CD8-positive, alpha-beta T cell (primary cell): ENCODE measurements at regions of chr6 and their contacts with region 1.

Region 1: GRCh38 chr6:33425668-33426577 is 6.1 kb downstream of the SYNGAP1 start:
- DNase-seq: peak; percentile 57 to 92 (median 84)
- ATAC-seq: peak; percentile 64
- H3K4me3 ChIP-seq: peak overlapping the region; percentile 50 to 69
- H3K4me3 Mint-ChIP-seq: peak overlapping the region; percentile 87
- H3K27ac ChIP-seq: peak overlapping the region; percentile 77 to 91
- H3K27ac Mint-ChIP-seq: peak overlapping the region; percentile 90
- H3K4me1 ChIP-seq: peaks cover 55% of the 10 kb centered on the region
- H3K4me1 Mint-ChIP-seq: peaks cover 77% of the 10 kb centered on the region
- H3K27me3 ChIP-seq: no peaks in the 10 kb centered on the region
- H3K27me3 Mint-ChIP-seq: no peaks in the 10 kb centered on the region
- CTCF ChIP-seq: peak; percentile 40

Region 2: GRCh38 chr6:33014841-33015634 is 410.9 kb before region 1 on chr6:
- CTCF ChIA-PET with region 1: no interaction called
- POLR2A ChIA-PET with region 1: no interaction called
- intact Hi-C with region 1: no loop called
- DNase-seq: peak in 7 of 9 experiments; percentile 43 to 89 (median 56)
- ATAC-seq: peak; percentile 74
- H3K4me3 ChIP-seq: no peak overlapping the region
- H3K4me3 Mint-ChIP-seq: no peak overlapping the region
- H3K27ac ChIP-seq: no peak overlapping the region
- H3K27ac Mint-ChIP-seq: no peak overlapping the region
- H3K4me1 ChIP-seq: peaks cover 23% of the 10 kb centered on the region
- H3K4me1 Mint-ChIP-seq: peaks cover 35% of the 10 kb centered on the region
- H3K27me3 ChIP-seq: no peaks in the 10 kb centered on the region
- H3K27me3 Mint-ChIP-seq: no peaks in the 10 kb centered on the region
- CTCF ChIP-seq: peak; percentile 87

Region 3: GRCh38 chr6:33118525-33119123 is 307.3 kb before region 1 on chr6:
- CTCF ChIA-PET with region 1: no interaction called
- POLR2A ChIA-PET with region 1: no interaction called
- intact Hi-C with region 1: loop called in 1 of 2 experiments (anchors 5 kb)
- DNase-seq: peak in 3 of 9 experiments; percentile 30 to 83 (median 76)
- ATAC-seq: peak; percentile 84
- H3K4me3 ChIP-seq: no peak overlapping the region
- H3K4me3 Mint-ChIP-seq: no peak overlapping the region
- H3K27ac ChIP-seq: no peak overlapping the region
- H3K27ac Mint-ChIP-seq: no peak overlapping the region
- H3K4me1 ChIP-seq: no peaks in the 10 kb centered on the region
- H3K4me1 Mint-ChIP-seq: peaks cover 18% of the 10 kb centered on the region
- H3K27me3 ChIP-seq: peaks cover 20 to 22% of the 10 kb centered on the region in 2 experiments
- H3K27me3 Mint-ChIP-seq: peaks cover 46% of the 10 kb centered on the region
- CTCF ChIP-seq: peak; percentile 65

Region 4: GRCh38 chr6:33299237-33299944 is 126.5 kb before region 1 on chr6:
- CTCF ChIA-PET with region 1: interaction called, 3 read pairs
- POLR2A ChIA-PET with region 1: interaction called, 10 read pairs
- intact Hi-C with region 1: loop called (anchors 1 to 2 kb)
- DNase-seq: peak; percentile 82 to 97 (median 94)
- ATAC-seq: peak; percentile 83
- H3K4me3 ChIP-seq: peak overlapping the region; percentile 88 to 91
- H3K4me3 Mint-ChIP-seq: peak overlapping the region; percentile 99
- H3K27ac ChIP-seq: peak overlapping the region; percentile 83 to 96
- H3K27ac Mint-ChIP-seq: peak overlapping the region; percentile 99
- H3K4me1 ChIP-seq: peaks cover 14% of the 10 kb centered on the region
- H3K4me1 Mint-ChIP-seq: peaks cover 41% of the 10 kb centered on the region
- H3K27me3 ChIP-seq: no peaks in the 10 kb centered on the region
- H3K27me3 Mint-ChIP-seq: no peaks in the 10 kb centered on the region
- CTCF ChIP-seq: peak; percentile 70

Region 5: DNA sequence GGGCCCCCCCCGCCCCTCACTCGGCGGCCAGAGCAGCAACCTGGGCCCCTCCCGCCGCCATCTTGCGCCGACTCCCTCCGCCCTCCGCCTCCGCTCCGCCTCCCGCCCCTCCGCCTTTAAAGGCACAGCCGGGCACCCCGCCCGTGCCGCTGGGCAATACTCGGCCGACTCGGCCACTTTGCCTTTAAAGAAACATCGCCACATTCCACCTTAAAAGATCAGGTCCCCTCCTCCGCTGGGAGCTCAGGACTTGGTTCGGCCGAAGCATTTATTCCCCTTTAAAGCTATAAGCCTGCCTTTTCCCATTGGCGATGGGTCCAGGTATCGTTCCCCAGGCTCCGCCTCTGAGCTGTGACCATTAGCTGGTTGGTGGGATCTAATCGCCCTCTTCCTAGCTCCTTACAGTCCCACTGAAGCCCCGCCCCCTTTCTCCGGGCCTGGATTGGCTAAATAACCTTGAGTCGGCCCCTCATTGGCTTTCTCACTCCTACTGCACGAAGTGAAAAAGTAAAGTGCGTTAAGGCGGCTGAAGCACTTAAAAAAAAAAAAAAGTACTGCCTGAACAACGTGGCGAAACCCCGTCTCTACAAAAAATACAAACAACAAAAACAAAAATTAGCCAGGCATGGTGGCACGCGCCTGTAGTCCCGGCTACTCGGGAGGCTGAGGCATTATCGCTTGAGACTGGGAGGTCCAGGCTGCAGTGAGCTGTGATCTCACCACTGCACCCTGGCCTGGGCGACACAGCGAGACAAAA is 108.1 kb before region 1 on chr6 and contains the start of gene ZBTB22:
- CTCF ChIA-PET with region 1: interaction called, 8 read pairs
- POLR2A ChIA-PET with region 1: interaction called, 5 read pairs
- intact Hi-C with region 1: loop called (anchors 2 kb)
- DNase-seq: peak; percentile 91 to 98 (median 96)
- ATAC-seq: peak; percentile 61
- H3K4me3 ChIP-seq: peak within 1 kb of the TSS; percentile 72 to 78
- H3K4me3 Mint-ChIP-seq: peak within 1 kb of the TSS; percentile 99
- H3K27ac ChIP-seq: peak within 1 kb of the TSS; percentile 60 to 99
- H3K27ac Mint-ChIP-seq: peak within 1 kb of the TSS; percentile 97
- H3K4me1 ChIP-seq: peaks cover 65% of the 10 kb centered on the region
- H3K4me1 Mint-ChIP-seq: peaks cover 77% of the 10 kb centered on the region
- H3K27me3 ChIP-seq: no peaks in the 10 kb centered on the region
- H3K27me3 Mint-ChIP-seq: no peaks in the 10 kb centered on the region
- CTCF ChIP-seq: no peak
- total RNA-seq, gene ZBTB22: 8.8 to 9.3 TPM

Region 6: GRCh38 chr6:33344701-33345697 is 80.9 kb before region 1 on chr6:
- CTCF ChIA-PET with region 1: no interaction called
- POLR2A ChIA-PET with region 1: interaction called, 10 read pairs
- intact Hi-C with region 1: loop called (anchors 1 kb)
- DNase-seq: peak; percentile 33 to 94 (median 70)
- ATAC-seq: peak; percentile 58
- H3K4me3 ChIP-seq: peak overlapping the region; percentile 40 to 53
- H3K4me3 Mint-ChIP-seq: peak overlapping the region; percentile 82
- H3K27ac ChIP-seq: peak overlapping the region; percentile 75 to 95
- H3K27ac Mint-ChIP-seq: peak overlapping the region; percentile 94
- H3K4me1 ChIP-seq: peaks cover 32% of the 10 kb centered on the region
- H3K4me1 Mint-ChIP-seq: peaks cover 42% of the 10 kb centered on the region
- H3K27me3 ChIP-seq: no peaks in the 10 kb centered on the region
- H3K27me3 Mint-ChIP-seq: no peaks in the 10 kb centered on the region
- CTCF ChIP-seq: peak; percentile 72

Region 7: DNA sequence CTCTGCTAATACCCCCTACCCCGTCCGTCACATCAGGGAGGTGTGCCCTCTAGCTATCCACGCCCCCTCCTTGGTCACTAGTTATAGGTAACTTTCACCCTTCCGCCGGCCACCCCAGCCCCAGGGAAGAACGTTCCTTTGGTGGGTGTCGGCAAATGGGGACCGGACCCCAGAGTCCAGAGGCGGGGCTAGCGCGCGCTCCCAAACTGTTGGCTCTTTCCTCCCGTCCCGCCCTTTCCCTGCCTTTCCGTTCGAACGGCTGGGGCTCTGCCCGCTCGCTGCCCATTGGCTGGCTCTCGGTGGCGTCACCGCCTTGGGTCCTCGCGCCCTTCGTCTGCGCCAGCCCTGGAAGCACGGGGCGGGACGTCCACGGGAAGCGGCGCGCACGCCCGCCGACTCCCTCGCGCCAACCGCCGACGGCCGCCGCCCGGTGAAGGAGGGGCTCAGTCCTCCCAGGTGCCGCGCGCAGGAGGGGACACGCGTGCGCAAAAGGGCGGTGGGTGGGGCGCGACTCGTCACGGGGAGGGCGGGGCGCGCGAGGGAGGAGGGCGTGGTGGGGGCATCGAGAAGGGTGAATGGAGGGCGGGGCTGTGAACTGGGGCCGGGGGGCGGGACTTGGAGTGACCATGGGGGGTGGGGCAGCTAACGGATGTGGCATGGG is 15.7 kb before region 1 on chr6:
- CTCF ChIA-PET with region 1: interaction called, 6 read pairs
- POLR2A ChIA-PET with region 1: interaction called, 9 read pairs
- intact Hi-C with region 1: loop called (anchors 1 kb)
- DNase-seq: peak; percentile 93 to 99 (median 99)
- ATAC-seq: peak; percentile 68
- H3K4me3 ChIP-seq: peak overlapping the region; percentile 82 to 95
- H3K4me3 Mint-ChIP-seq: peak overlapping the region; percentile 88
- H3K27ac ChIP-seq: peak overlapping the region; percentile 94 to 96
- H3K27ac Mint-ChIP-seq: peak overlapping the region; percentile 91
- H3K4me1 ChIP-seq: peaks cover 40% of the 10 kb centered on the region
- H3K4me1 Mint-ChIP-seq: peaks cover 47% of the 10 kb centered on the region
- H3K27me3 ChIP-seq: no peaks in the 10 kb centered on the region
- H3K27me3 Mint-ChIP-seq: no peaks in the 10 kb centered on the region
- CTCF ChIP-seq: no peak

Region 8: GRCh38 chr6:33700391-33701050 is 274.6 kb after region 1 on chr6:
- CTCF ChIA-PET with region 1: no interaction called
- POLR2A ChIA-PET with region 1: no interaction called
- intact Hi-C with region 1: loop called in 1 of 2 experiments (anchors 10 kb)
- DNase-seq: peak; percentile 46 to 84 (median 78)
- ATAC-seq: peak; percentile 71
- H3K4me3 ChIP-seq: no peak overlapping the region
- H3K4me3 Mint-ChIP-seq: no peak overlapping the region
- H3K27ac ChIP-seq: peak overlapping the region in 1 of 2 experiments; percentile 48
- H3K27ac Mint-ChIP-seq: peak overlapping the region; percentile 60
- H3K4me1 ChIP-seq: peaks cover 31% of the 10 kb centered on the region
- H3K4me1 Mint-ChIP-seq: peaks cover 35% of the 10 kb centered on the region
- H3K27me3 ChIP-seq: no peaks in the 10 kb centered on the region
- H3K27me3 Mint-ChIP-seq: no peaks in the 10 kb centered on the region
- CTCF ChIP-seq: peak; percentile 63